Endothelial cell of umbilical vein (primary cell): ENCODE measurements at regions of chr1 and their contacts with region 1.

Region 1: GRCh38 chr1:29332204-29332603 is 95.9 kb downstream of the PTPRU start:
- DNase-seq: peak; percentile 22
- H3K4me3 ChIP-seq: no peak overlapping the region
- H3K27ac ChIP-seq: no peak overlapping the region
- H3K4me1 ChIP-seq: no peaks in the 10 kb centered on the region
- H3K27me3 ChIP-seq: peaks cover 2 to 5% of the 10 kb centered on the region in 2 experiments
- CTCF ChIP-seq: peak; percentile 27 to 51
- POLR2A ChIP-seq: no peak

Region 2: GRCh38 chr1:30111431-30111830 is 779.2 kb after region 1 on chr1:
- CTCF ChIA-PET with region 1: interaction called, 13 read pairs
- POLR2A ChIA-PET with region 1: no interaction called
- dilution Hi-C with region 1: no loop called
- intact Hi-C with region 1: no loop called
- DNase-seq: peak; percentile 18
- H3K4me3 ChIP-seq: no peak overlapping the region
- H3K27ac ChIP-seq: no peak overlapping the region
- H3K4me1 ChIP-seq: no peaks in the 10 kb centered on the region
- H3K27me3 ChIP-seq: peaks cover 0 to 1% of the 10 kb centered on the region in 2 experiments
- CTCF ChIP-seq: peak; percentile 53 to 56
- POLR2A ChIP-seq: no peak